ENCODE measurements at regions of chr22 and their contacts with region 1.

Region 1: DNA sequence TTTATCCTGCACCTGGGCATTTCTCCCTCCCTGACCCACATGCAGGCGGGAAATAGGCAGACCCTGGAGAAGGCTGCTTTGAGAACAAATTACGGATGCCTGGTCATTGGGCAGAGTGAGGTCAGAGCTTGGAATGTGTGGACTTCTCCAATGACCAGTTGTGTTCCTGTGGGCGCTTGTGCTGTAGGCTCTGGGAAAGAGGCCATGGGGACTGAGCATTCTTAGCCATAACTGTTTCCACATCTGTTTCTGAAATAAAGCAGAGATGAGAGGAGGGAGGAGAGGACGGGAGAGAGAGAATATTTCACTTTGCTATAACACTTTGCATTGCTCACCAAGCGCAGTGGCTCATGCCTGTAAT is 11.2 kb upstream of the TMEM184B start:
- DNase-seq: no peak
- H3K4me3 ChIP-seq: no peak overlapping the region
- H3K27ac ChIP-seq: peak overlapping the region; percentile 73 to 84
- H3K4me1 ChIP-seq: no peaks in the 10 kb centered on the region
- H3K27me3 ChIP-seq: no peaks in the 10 kb centered on the region
- CTCF ChIP-seq: no peak
- POLR2A ChIP-seq: no peak

Region 2: GRCh38 chr22:36425977-36426523 is 1858.0 kb before region 1 on chr22:
- intact Hi-C with region 1: no loop called
- DNase-seq: no peak
- H3K4me3 ChIP-seq: no peak overlapping the region
- H3K27ac ChIP-seq: peak overlapping the region; percentile 8 to 51
- H3K4me1 ChIP-seq: no peaks in the 10 kb centered on the region
- H3K27me3 ChIP-seq: no peaks in the 10 kb centered on the region
- CTCF ChIP-seq: no peak
- POLR2A ChIP-seq: no peak

Region 3: GRCh38 chr22:39364714-39365491 is 1080.9 kb after region 1 on chr22:
- intact Hi-C with region 1: loop called (anchors 5 kb)
- DNase-seq: no peak
- H3K4me3 ChIP-seq: no peak overlapping the region
- H3K27ac ChIP-seq: peak overlapping the region; percentile 31 to 63
- H3K4me1 ChIP-seq: no peaks in the 10 kb centered on the region
- H3K27me3 ChIP-seq: no peaks in the 10 kb centered on the region
- CTCF ChIP-seq: peak in 1 of 3 donors; percentile 28
- POLR2A ChIP-seq: no peak

Measured in breast epithelium (tissue), 4 donors.